Caco-2 (cell line): ENCODE measurements at regions of chr4 and their contacts with region 1.

Region 1: DNA sequence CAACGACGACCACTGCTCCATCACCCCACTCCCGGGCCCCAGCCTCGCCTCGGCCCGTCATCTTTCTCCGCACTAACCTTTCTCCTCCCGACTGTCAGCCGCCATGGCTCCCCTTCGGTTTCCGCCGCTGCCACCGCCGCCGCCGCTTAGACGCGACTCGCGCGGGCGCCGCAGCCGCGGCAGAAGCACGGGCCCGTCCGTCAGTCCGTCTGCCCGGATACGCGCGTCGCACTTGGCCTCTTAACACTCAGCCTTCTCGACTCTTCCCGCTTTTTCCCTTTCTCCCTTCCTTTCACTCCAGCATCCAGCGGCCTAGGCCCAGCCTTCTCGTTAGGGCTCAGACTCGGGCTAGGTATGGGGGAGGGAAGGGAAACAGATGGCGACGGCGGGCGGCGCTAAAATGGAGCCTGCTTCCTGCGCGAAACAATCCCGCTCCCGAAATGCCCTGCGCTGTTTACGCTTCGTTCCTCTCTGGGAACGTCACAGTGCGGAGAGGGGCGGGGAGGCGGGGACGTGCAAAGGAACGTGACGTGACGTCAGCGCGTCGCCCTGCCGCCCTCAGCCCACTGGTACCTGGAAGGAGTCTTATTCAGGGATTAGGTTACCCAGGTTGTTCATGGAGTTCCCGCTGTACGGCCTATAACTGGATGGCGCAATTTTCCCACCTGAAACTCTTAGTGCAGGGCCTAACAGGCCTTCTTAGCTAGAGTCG is at the start of gene YTHDC1:
- DNase-seq: peak; percentile 96 to 97
- H3K4me3 ChIP-seq: peak within 1 kb of the TSS; percentile 74
- H3K4me3 Mint-ChIP-seq: peak within 1 kb of the TSS; percentile 92
- H3K27ac Mint-ChIP-seq: peak within 1 kb of the TSS; percentile 95
- H3K4me1 ChIP-seq: peaks cover 29% of the 10 kb centered on the region
- H3K4me1 Mint-ChIP-seq: peaks cover 7% of the 10 kb centered on the region
- H3K27me3 ChIP-seq: no peaks in the 10 kb centered on the region
- H3K27me3 Mint-ChIP-seq: no peaks in the 10 kb centered on the region
- CTCF ChIP-seq: no peak
- total RNA-seq, gene YTHDC1: 101 and 109 TPM in 2 replicates

Region 2: DNA sequence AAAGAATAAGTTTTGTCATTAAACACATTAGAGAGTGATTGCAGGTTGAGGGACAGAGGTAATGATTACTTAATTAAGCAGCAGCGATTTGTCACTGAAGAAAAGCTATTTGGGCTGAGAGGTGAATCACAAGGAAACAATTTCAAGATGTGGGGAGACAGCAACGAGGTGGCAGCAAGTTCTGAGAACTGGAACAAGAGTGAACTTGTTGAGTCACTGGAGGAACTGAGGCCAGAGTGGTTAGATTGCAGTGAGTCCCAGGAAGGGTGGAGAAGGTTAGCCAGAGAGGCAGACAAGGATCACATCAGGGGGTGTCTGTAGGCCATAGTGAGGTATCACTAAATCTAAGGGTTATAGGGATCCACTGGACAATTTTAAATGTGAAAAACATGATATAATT is 328.6 kb before region 1 on chr4:
- CTCF ChIA-PET with region 1: no interaction called
- POLR2A ChIA-PET with region 1: no interaction called
- intact Hi-C with region 1: no loop called
- DNase-seq: no peak
- H3K4me3 ChIP-seq: no peak overlapping the region
- H3K4me3 Mint-ChIP-seq: no peak overlapping the region
- H3K27ac Mint-ChIP-seq: no peak overlapping the region
- H3K4me1 ChIP-seq: no peaks in the 10 kb centered on the region
- H3K4me1 Mint-ChIP-seq: no peaks in the 10 kb centered on the region
- H3K27me3 ChIP-seq: no peaks in the 10 kb centered on the region
- H3K27me3 Mint-ChIP-seq: peaks cover 14% of the 10 kb centered on the region
- CTCF ChIP-seq: no peak

Region 3: GRCh38 chr4:68283714-68284113 is 66.1 kb before region 1 on chr4:
- CTCF ChIA-PET with region 1: no interaction called
- POLR2A ChIA-PET with region 1: no interaction called
- intact Hi-C with region 1: loop called (anchors 1 kb)
- DNase-seq: no peak
- H3K4me3 ChIP-seq: no peak overlapping the region
- H3K4me3 Mint-ChIP-seq: no peak overlapping the region
- H3K27ac Mint-ChIP-seq: peak overlapping the region; percentile 82
- H3K4me1 ChIP-seq: peaks cover 41% of the 10 kb centered on the region
- H3K4me1 Mint-ChIP-seq: peaks cover 19% of the 10 kb centered on the region
- H3K27me3 ChIP-seq: no peaks in the 10 kb centered on the region
- H3K27me3 Mint-ChIP-seq: no peaks in the 10 kb centered on the region
- CTCF ChIP-seq: no peak

Region 4: DNA sequence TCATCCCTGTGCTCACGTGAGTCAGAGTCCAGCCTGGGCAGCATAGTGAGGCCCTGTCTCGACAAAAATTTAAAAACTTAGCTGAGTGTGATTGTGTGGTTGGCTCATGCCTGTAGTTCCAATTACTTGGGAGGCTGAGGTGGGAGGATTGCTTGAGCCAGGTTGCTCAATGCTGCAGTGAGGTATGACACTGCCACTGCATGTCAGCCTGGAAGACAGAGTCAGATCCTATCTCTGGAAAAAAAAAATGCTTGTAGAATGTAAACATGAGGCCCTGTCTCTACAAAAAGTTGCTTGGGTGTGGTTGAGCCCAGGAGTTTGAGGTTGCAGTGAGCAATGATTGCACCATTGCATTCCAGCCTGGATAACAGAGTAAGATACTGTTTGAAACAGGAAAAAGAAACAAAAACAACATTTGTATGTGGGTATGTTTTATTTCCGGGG is 11.4 kb after region 1 on chr4:
- CTCF ChIA-PET with region 1: interaction called, 3 read pairs
- POLR2A ChIA-PET with region 1: interaction called, 4 read pairs
- intact Hi-C with region 1: loop called (anchors 1 kb)
- DNase-seq: peak; percentile 77 to 84
- H3K4me3 ChIP-seq: no peak overlapping the region
- H3K4me3 Mint-ChIP-seq: peak overlapping the region; percentile 55
- H3K27ac Mint-ChIP-seq: peak overlapping the region; percentile 88
- H3K4me1 ChIP-seq: peaks cover 20% of the 10 kb centered on the region
- H3K4me1 Mint-ChIP-seq: peaks cover under 1% of the 10 kb centered on the region
- H3K27me3 ChIP-seq: no peaks in the 10 kb centered on the region
- H3K27me3 Mint-ChIP-seq: no peaks in the 10 kb centered on the region
- CTCF ChIP-seq: no peak

Region 5: GRCh38 chr4:68368691-68369480 is 19.1 kb after region 1 on chr4:
- CTCF ChIA-PET with region 1: no interaction called
- POLR2A ChIA-PET with region 1: interaction called, 4 read pairs
- intact Hi-C with region 1: loop called (anchors 1 kb)
- DNase-seq: peak; percentile 61 to 73
- H3K4me3 ChIP-seq: no peak overlapping the region
- H3K4me3 Mint-ChIP-seq: peak overlapping the region; percentile 47
- H3K27ac Mint-ChIP-seq: peak overlapping the region; percentile 94
- H3K4me1 ChIP-seq: peaks cover 27% of the 10 kb centered on the region
- H3K4me1 Mint-ChIP-seq: peaks cover 17% of the 10 kb centered on the region
- H3K27me3 ChIP-seq: no peaks in the 10 kb centered on the region
- H3K27me3 Mint-ChIP-seq: no peaks in the 10 kb centered on the region
- CTCF ChIP-seq: no peak

Region 6: GRCh38 chr4:68375667-68376559 is 26.1 kb after region 1 on chr4:
- CTCF ChIA-PET with region 1: interaction called, 7 read pairs
- POLR2A ChIA-PET with region 1: interaction called, 3 read pairs
- intact Hi-C with region 1: loop called (anchors 1 kb)
- DNase-seq: peak; percentile 65 to 78
- H3K4me3 ChIP-seq: peak overlapping the region; percentile 50
- H3K4me3 Mint-ChIP-seq: peak overlapping the region; percentile 78
- H3K27ac Mint-ChIP-seq: no peak overlapping the region
- H3K4me1 ChIP-seq: no peaks in the 10 kb centered on the region
- H3K4me1 Mint-ChIP-seq: peaks cover 7% of the 10 kb centered on the region
- H3K27me3 ChIP-seq: no peaks in the 10 kb centered on the region
- H3K27me3 Mint-ChIP-seq: no peaks in the 10 kb centered on the region
- CTCF ChIP-seq: peak; percentile 70 to 84